ENCODE measurements at regions of chr14 and their contacts with region 1.

Region 1: GRCh38 chr14:64891839-64892375 is 12.2 kb upstream of the SPTB start:
- DNase-seq: peak in 1 of 5 donors; percentile 12
- ATAC-seq: peak in 3 of 4 donors; percentile 76 to 81 (median 79)
- H3K4me3 ChIP-seq: no peak overlapping the region
- H3K27ac ChIP-seq: no peak overlapping the region
- H3K4me1 ChIP-seq: no peaks in the 10 kb centered on the region
- H3K27me3 ChIP-seq: peaks cover 0 to 10% (median 0%) of the 10 kb centered on the region in 9 donors
- CTCF ChIP-seq: peak; percentile 33 to 72 (median 58)
- POLR2A ChIP-seq: no peak

Region 2: GRCh38 chr14:64696355-64696857 is 195.5 kb before region 1 on chr14:
- intact Hi-C with region 1: no loop called
- DNase-seq: peak in 1 of 5 donors; percentile 24
- ATAC-seq: peak; percentile 31 to 58 (median 42)
- H3K4me3 ChIP-seq: no peak overlapping the region
- H3K27ac ChIP-seq: peak overlapping the region in 2 of 12 donors; percentile 3 to 60
- H3K4me1 ChIP-seq: peaks cover 0 to 57% (median 30%) of the 10 kb centered on the region in 12 donors
- H3K27me3 ChIP-seq: no peaks in the 10 kb centered on the region
- CTCF ChIP-seq: no peak
- POLR2A ChIP-seq: no peak

Region 3: GRCh38 chr14:64764641-64765520 is 127.0 kb before region 1 on chr14:
- intact Hi-C with region 1: loop called in 1 of 10 experiments (anchors 5 kb)
- DNase-seq: peak; percentile 68 to 83 (median 74)
- ATAC-seq: peak in 3 of 4 donors; percentile 54 to 66 (median 65)
- H3K4me3 ChIP-seq: peak overlapping the region in 7 of 12 donors; percentile 27 to 45 (median 33)
- H3K27ac ChIP-seq: peak overlapping the region in 9 of 12 donors; percentile 16 to 87 (median 78)
- H3K4me1 ChIP-seq: peaks cover 0 to 48% (median 39%) of the 10 kb centered on the region in 12 donors
- H3K27me3 ChIP-seq: no peaks in the 10 kb centered on the region
- CTCF ChIP-seq: peak; percentile 68 to 95 (median 86)
- POLR2A ChIP-seq: no peak

Region 4: GRCh38 chr14:64800000-64800399 is 91.9 kb before region 1 on chr14:
- intact Hi-C with region 1: loop called in 3 of 10 experiments (anchors 5 kb)
- DNase-seq: peak in 4 of 5 donors; percentile 41 to 67 (median 50)
- ATAC-seq: peak; percentile 44 to 72 (median 63)
- H3K4me3 ChIP-seq: no peak overlapping the region
- H3K27ac ChIP-seq: no peak overlapping the region
- H3K4me1 ChIP-seq: peaks cover 0 to 7% (median 0%) of the 10 kb centered on the region in 12 donors
- H3K27me3 ChIP-seq: no peaks in the 10 kb centered on the region
- CTCF ChIP-seq: peak; percentile 29 to 63 (median 50)
- POLR2A ChIP-seq: no peak

Region 5: GRCh38 chr14:64812217-64812811 is 79.6 kb before region 1 on chr14:
- intact Hi-C with region 1: no loop called
- DNase-seq: no peak
- ATAC-seq: peak in 1 of 4 donors; percentile 21
- H3K4me3 ChIP-seq: no peak overlapping the region
- H3K27ac ChIP-seq: no peak overlapping the region
- H3K4me1 ChIP-seq: peaks cover 0 to 35% (median 6%) of the 10 kb centered on the region in 12 donors
- H3K27me3 ChIP-seq: no peaks in the 10 kb centered on the region
- CTCF ChIP-seq: no peak
- POLR2A ChIP-seq: no peak

Region 6: GRCh38 chr14:64823305-64823861 is 68.5 kb before region 1 on chr14:
- intact Hi-C with region 1: loop called in 8 of 10 experiments (anchors 2 to 5 kb)
- DNase-seq: peak; percentile 74 to 89 (median 86)
- ATAC-seq: peak; percentile 74 to 89 (median 86)
- H3K4me3 ChIP-seq: no peak overlapping the region
- H3K27ac ChIP-seq: peak overlapping the region in 2 of 12 donors; percentile 4 to 17
- H3K4me1 ChIP-seq: peaks cover 0 to 51% (median 20%) of the 10 kb centered on the region in 12 donors
- H3K27me3 ChIP-seq: no peaks in the 10 kb centered on the region
- CTCF ChIP-seq: peak; percentile 62 to 84 (median 76)
- POLR2A ChIP-seq: no peak

Region 7: GRCh38 chr14:65179918-65180724 is 288.2 kb after region 1 on chr14:
- intact Hi-C with region 1: no loop called
- DNase-seq: peak in 3 of 5 donors; percentile 28 to 60 (median 51)
- ATAC-seq: peak; percentile 67 to 91 (median 84)
- H3K4me3 ChIP-seq: no peak overlapping the region
- H3K27ac ChIP-seq: peak overlapping the region in 4 of 12 donors; percentile 7 to 37 (median 16)
- H3K4me1 ChIP-seq: peaks cover 0 to 11% (median 6%) of the 10 kb centered on the region in 12 donors
- H3K27me3 ChIP-seq: no peaks in the 10 kb centered on the region
- CTCF ChIP-seq: no peak
- POLR2A ChIP-seq: no peak

Measured in heart left ventricle (tissue), 16 donors.